ENCODE measurements at regions of chr11 and their contacts with region 1.

Region 1: GRCh38 chr11:95108159-95108611 is 18.5 kb downstream of the ENDOD1 start:
- DNase-seq: peak; percentile 12 to 78
- H3K4me3 ChIP-seq: peak overlapping the region in 1 of 2 donors; percentile 17
- H3K27ac ChIP-seq: peak overlapping the region; percentile 74 to 81
- H3K4me1 ChIP-seq: peaks cover 17 to 26% of the 10 kb centered on the region in 2 donors
- H3K27me3 ChIP-seq: no peaks in the 10 kb centered on the region
- CTCF ChIP-seq: no peak

Region 2: DNA sequence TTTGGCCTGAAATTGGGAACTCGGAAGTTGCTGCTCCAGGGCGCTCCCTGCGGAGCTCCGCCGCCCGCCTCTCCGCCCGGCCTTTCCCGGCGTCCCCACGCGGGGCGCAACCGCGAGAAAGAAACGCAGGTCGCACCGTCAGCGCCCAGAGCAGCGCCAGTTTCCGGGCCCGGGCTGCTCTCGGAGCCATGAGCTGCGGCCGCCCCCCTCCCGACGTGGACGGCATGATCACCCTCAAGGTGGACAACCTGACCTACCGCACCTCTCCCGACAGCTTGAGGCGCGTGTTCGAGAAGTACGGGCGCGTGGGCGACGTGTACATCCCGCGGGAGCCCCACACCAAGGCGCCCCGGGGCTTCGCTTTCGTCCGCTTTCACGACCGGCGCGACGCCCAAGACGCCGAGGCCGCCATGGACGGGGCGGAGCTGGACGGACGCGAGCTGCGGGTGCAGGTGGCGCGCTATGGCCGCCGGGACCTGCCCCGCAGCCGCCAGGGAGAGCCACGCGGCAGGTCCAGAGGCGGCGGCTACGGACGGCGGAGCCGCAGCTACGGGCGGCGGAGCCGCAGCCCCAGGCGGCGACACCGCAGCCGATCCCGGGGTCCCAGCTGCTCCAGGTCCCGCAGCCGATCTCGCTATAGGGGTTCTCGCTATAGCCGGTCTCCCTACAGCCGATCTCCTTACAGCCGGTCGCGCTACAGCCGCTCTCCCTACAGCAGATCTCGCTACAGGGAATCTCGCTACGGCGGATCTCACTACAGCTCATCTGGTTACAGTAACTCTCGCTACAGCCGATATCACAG is 40.9 kb before region 1 on chr11:
- intact Hi-C with region 1: loop called (anchors 5 kb)
- DNase-seq: peak in 1 of 2 donors; percentile 93
- H3K4me3 ChIP-seq: peak overlapping the region; percentile 88 to 95
- H3K27ac ChIP-seq: peak overlapping the region; percentile 98 to 99
- H3K4me1 ChIP-seq: peaks cover 0 to 14% of the 10 kb centered on the region in 2 donors
- H3K27me3 ChIP-seq: no peaks in the 10 kb centered on the region
- CTCF ChIP-seq: peak; percentile 71 to 78 (median 73)

Region 3: GRCh38 chr11:95084509-95084908 is 23.7 kb before region 1 on chr11:
- intact Hi-C with region 1: no loop called
- DNase-seq: no peak
- H3K4me3 ChIP-seq: no peak overlapping the region
- H3K27ac ChIP-seq: no peak overlapping the region
- H3K4me1 ChIP-seq: peaks cover 10 to 27% of the 10 kb centered on the region in 2 donors
- H3K27me3 ChIP-seq: no peaks in the 10 kb centered on the region
- CTCF ChIP-seq: no peak

Region 4: GRCh38 chr11:95140397-95141033 is 32.3 kb after region 1 on chr11:
- intact Hi-C with region 1: loop called (anchors 5 kb)
- DNase-seq: no peak
- H3K4me3 ChIP-seq: no peak overlapping the region
- H3K27ac ChIP-seq: no peak overlapping the region
- H3K4me1 ChIP-seq: no peaks in the 10 kb centered on the region
- H3K27me3 ChIP-seq: no peaks in the 10 kb centered on the region
- CTCF ChIP-seq: no peak

Measured in ascending aorta (tissue), 2 donors.